Activated CD4-positive, alpha-beta T cell treated with anti-CD3 and anti-CD28 coated beads, Interleukin-2, amount 10 ng/mL, durations not matched to agents 24 days and 14 days (primary cell): ENCODE measurements at regions of chr4 and their contacts with region 1.

Region 1: DNA sequence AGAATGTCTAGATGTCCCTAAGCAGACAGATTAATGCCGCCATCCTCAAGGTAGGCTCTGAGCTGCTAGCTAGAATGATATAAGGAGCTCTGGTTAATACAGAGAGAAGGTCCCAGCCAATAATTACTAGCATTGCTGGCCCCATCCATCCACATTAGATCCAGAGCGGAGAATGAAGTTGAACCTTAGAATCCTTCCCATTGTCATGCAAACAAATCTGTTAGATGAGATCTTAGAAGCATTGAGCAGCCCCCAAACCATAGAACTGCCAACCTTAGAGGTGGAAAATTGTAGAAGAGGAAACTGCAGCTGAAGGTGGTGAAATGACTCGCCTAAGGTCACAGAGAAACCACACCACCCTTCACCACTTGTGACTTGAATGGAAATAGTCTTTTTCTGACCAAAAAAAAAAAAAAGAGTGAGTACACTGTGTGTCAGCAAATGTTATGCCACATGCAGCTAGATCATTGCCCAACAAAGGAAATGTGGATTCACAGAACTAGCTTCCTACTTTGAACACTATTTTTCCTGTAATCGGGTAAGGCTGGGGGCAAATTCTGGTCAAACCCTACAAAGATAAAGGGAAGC is 162.1 kb downstream of the SMIM20 start:
- DNase-seq: peak; percentile 87
- H3K4me3 Mint-ChIP-seq: peak overlapping the region; percentile 52
- H3K27ac Mint-ChIP-seq: peak overlapping the region; percentile 98
- H3K4me1 Mint-ChIP-seq: peaks cover 70% of the 10 kb centered on the region
- H3K27me3 Mint-ChIP-seq: no peaks in the 10 kb centered on the region

Region 2: DNA sequence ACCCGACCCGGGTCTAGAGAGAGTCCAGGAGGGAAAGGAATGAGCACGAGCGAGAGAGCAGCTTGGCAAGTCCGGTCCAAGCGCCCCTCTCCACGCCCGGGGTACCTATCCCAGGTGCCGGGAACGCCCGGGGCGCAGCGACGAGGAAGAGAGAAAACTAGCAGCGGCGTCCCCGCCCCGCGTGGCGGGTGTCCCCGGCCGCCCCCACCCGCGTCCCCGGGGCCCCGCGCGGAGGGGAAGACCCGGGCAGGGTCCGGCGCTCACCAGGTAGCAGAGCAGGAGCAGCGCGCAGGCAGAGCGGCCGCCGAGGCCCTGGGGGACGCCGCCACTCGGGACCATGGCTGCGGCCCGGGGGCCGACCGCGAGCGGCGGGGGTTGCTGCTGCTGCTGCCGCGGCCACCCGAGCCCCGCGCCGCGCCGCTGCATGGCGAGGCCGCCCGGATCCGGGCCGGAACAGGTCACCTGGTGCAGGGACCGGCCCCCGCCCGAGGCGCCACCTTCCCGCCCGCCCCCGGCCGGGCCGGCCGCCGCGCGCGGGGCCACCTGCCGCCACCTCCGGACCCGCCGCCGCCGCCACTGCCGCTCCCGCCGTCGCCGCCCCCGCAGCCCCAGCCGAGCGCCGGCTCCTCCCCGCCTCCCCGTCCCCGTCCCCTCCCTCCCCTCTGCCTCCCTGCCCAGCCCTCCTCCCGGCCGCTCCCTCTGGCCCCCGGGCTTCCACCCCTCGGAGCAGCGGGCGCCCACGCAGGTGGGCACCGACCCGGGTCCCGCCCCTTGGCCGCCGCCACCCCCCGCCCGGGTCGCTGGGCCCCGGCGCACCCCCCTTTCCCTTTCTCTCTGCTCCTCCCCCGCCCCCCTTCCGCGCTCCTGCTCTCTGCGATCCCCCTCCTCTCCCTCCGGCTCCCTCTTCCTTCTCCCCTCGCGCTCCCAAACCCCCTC is 213.4 kb before region 1 on chr4 and contains the start of gene SEL1L3:
- intact Hi-C with region 1: loop called (anchors 5 kb)
- DNase-seq: peak; percentile 86
- H3K4me3 Mint-ChIP-seq: peak within 1 kb of the TSS; percentile 99
- H3K27ac Mint-ChIP-seq: peak within 1 kb of the TSS; percentile 100
- H3K4me1 Mint-ChIP-seq: peaks cover 30% of the 10 kb centered on the region
- H3K27me3 Mint-ChIP-seq: peaks cover 2% of the 10 kb centered on the region
- total RNA-seq, gene SEL1L3: 33.9 and 35.3 TPM in 2 replicates

Region 3: GRCh38 chr4:26009502-26009901 is 66.6 kb before region 1 on chr4:
- intact Hi-C with region 1: loop called (anchors 1 kb)
- DNase-seq: no peak
- H3K4me3 Mint-ChIP-seq: no peak overlapping the region
- H3K27ac Mint-ChIP-seq: no peak overlapping the region
- H3K4me1 Mint-ChIP-seq: peaks cover 10% of the 10 kb centered on the region
- H3K27me3 Mint-ChIP-seq: peaks cover 24% of the 10 kb centered on the region

Region 4: GRCh38 chr4:26088433-26088928 is 12.4 kb after region 1 on chr4:
- intact Hi-C with region 1: loop called (anchors 1 kb)
- DNase-seq: peak; percentile 77
- H3K4me3 Mint-ChIP-seq: peak overlapping the region; percentile 80
- H3K27ac Mint-ChIP-seq: peak overlapping the region; percentile 99
- H3K4me1 Mint-ChIP-seq: peaks cover 68% of the 10 kb centered on the region
- H3K27me3 Mint-ChIP-seq: no peaks in the 10 kb centered on the region

Region 5: DNA sequence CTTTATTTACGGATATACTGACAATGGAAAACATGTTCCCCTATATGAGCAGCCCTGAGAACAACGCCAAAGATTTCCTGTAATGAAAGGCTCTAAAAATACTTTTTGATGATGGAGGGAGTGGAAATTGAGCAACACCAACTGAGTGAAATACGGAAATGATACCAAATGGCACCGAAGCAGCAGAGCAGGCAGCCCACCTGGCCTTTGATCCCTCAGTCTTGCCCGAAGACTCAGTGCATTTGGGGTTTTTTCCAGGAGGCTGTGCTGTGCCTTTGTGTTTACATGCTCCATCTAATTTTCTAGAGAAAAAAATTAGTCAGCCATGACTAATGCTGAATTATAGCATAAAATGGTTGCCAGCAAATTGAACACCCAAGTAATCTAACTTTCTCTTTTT is 74.9 kb after region 1 on chr4:
- intact Hi-C with region 1: loop called (anchors 1 kb)
- DNase-seq: no peak
- H3K4me3 Mint-ChIP-seq: no peak overlapping the region
- H3K27ac Mint-ChIP-seq: peak overlapping the region; percentile 92
- H3K4me1 Mint-ChIP-seq: peaks cover 43% of the 10 kb centered on the region
- H3K27me3 Mint-ChIP-seq: no peaks in the 10 kb centered on the region

Region 6: GRCh38 chr4:26885912-26886274 is 809.8 kb after region 1 on chr4:
- intact Hi-C with region 1: loop called (anchors 10 kb)
- DNase-seq: peak; percentile 87
- H3K4me3 Mint-ChIP-seq: peak overlapping the region; percentile 72
- H3K27ac Mint-ChIP-seq: peak overlapping the region; percentile 87
- H3K4me1 Mint-ChIP-seq: peaks cover 53% of the 10 kb centered on the region
- H3K27me3 Mint-ChIP-seq: no peaks in the 10 kb centered on the region